Heart right ventricle (tissue), 16 donors: ENCODE measurements at regions of chr20 and their contacts with region 1.

Region 1: GRCh38 chr20:51639206-51639832 is 96.8 kb upstream of the NFATC2 start:
- DNase-seq: peak; percentile 65 to 69
- ATAC-seq: peak; percentile 64 to 83 (median 78)
- H3K4me3 ChIP-seq: no peak overlapping the region
- H3K27ac ChIP-seq: no peak overlapping the region
- H3K4me1 ChIP-seq: peaks cover 0 to 9% (median 0%) of the 10 kb centered on the region in 9 donors
- H3K27me3 ChIP-seq: no peaks in the 10 kb centered on the region
- CTCF ChIP-seq: peak; percentile 66 to 89 (median 85)

Region 2: GRCh38 chr20:50932016-50932485 is 707.3 kb before region 1 on chr20:
- intact Hi-C with region 1: no loop called
- DNase-seq: no peak
- ATAC-seq: peak in 1 of 8 donors; percentile 0
- H3K4me3 ChIP-seq: peak overlapping the region; percentile 50 to 74 (median 64)
- H3K27ac ChIP-seq: peak overlapping the region; percentile 95 to 100 (median 99)
- H3K4me1 ChIP-seq: peaks cover 0 to 36% (median 29%) of the 10 kb centered on the region in 9 donors
- H3K27me3 ChIP-seq: no peaks in the 10 kb centered on the region
- CTCF ChIP-seq: no peak

Region 3: GRCh38 chr20:51695574-51696303 is 56.4 kb after region 1 on chr20:
- intact Hi-C with region 1: loop called in 2 of 10 experiments (anchors 2 to 10 kb)
- DNase-seq: no peak
- ATAC-seq: no peak
- H3K4me3 ChIP-seq: no peak overlapping the region
- H3K27ac ChIP-seq: no peak overlapping the region
- H3K4me1 ChIP-seq: peaks cover 0 to 15% (median 0%) of the 10 kb centered on the region in 9 donors
- H3K27me3 ChIP-seq: peaks cover 0 to 9% (median 0%) of the 10 kb centered on the region in 7 donors
- CTCF ChIP-seq: no peak

Region 4: DNA sequence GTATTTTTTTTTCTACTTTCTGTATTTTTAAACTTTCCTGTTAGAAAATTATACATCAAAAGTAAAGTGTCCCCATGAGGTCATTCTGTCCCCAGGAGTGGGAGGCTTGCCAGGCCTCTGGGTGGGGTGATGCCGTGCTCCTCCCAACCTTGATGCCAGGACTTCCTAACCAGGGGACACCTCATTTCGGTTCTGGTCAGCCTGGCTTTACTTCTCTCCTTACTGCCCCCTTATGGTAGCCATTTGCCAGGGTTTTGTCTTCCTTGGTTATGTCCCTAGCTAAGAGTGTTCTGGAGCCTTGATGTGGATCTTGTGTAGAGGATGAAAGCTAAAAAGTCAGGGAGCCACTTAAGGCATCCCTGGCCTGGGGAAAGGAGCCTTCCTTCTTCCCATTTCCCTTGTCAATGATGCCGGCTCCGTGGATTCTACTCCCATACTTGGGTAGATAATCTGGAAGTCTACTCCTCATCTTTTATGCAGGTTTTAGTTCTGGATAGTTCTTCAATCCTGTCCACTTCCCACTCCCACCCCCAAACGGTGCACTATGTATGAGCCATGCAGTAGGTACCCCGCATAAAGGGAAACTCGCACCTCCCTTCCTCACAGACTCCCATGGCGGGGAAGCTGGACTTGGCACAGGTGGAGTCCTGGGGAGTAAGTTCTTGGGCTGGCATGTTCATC is 327.1 kb after region 1 on chr20:
- intact Hi-C with region 1: loop called in 6 of 10 experiments (anchors 5 to 10 kb)
- DNase-seq: peak; percentile 13 to 34
- ATAC-seq: peak in 6 of 8 donors; percentile 25 to 72 (median 60)
- H3K4me3 ChIP-seq: no peak overlapping the region
- H3K27ac ChIP-seq: no peak overlapping the region
- H3K4me1 ChIP-seq: no peaks in the 10 kb centered on the region
- H3K27me3 ChIP-seq: peaks cover 0 to 9% (median 0%) of the 10 kb centered on the region in 7 donors
- CTCF ChIP-seq: peak in 8 of 9 donors; percentile 13 to 67 (median 52)